ENCODE measurements at regions of chr6 and their contacts with region 1.

Region 1: DNA sequence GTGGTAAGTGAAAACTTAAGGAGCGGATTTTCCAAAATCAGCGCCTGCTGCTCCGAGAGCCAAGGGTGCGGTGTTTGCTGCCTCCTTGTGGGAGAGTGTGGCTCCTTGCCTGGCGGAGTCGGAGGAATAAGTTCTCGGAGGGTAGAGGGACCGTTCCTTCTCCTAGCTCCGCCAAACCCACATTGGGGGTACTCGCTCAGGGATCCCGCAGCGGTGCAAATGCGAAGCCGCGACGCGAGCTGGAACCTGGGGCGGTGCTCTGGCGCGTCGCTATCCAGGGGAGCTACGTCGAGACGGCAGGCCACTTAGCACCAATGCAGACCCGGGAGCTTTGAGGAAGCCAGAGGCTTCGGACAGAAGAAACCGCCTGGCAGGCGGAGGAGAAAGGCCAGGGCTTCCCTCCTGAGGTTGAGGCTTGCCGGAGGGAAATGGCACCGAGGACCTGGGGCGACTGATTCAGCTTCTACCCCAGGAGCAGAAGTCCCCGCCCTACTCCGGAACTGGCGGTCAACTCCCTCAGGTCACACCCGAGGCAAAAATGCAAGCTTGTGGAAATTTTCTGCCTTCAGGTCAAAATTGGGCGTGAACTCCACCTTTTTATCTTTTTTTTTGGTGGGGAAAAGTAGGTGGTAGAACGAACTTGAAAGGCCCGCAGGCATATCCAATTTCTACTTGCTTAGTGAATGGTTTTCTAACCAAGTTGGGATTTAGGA is 5.7 kb upstream of the DDX43 start:
- DNase-seq: peak; percentile 80 to 85
- H3K4me3 ChIP-seq: peak overlapping the region; percentile 63
- H3K4me3 Mint-ChIP-seq: peak overlapping the region; percentile 87
- H3K27ac Mint-ChIP-seq: peak overlapping the region; percentile 90
- H3K4me1 ChIP-seq: no peaks in the 10 kb centered on the region
- H3K4me1 Mint-ChIP-seq: no peaks in the 10 kb centered on the region
- H3K27me3 ChIP-seq: no peaks in the 10 kb centered on the region
- H3K27me3 Mint-ChIP-seq: no peaks in the 10 kb centered on the region
- CTCF ChIP-seq: peak; percentile 79 to 81

Region 2: DNA sequence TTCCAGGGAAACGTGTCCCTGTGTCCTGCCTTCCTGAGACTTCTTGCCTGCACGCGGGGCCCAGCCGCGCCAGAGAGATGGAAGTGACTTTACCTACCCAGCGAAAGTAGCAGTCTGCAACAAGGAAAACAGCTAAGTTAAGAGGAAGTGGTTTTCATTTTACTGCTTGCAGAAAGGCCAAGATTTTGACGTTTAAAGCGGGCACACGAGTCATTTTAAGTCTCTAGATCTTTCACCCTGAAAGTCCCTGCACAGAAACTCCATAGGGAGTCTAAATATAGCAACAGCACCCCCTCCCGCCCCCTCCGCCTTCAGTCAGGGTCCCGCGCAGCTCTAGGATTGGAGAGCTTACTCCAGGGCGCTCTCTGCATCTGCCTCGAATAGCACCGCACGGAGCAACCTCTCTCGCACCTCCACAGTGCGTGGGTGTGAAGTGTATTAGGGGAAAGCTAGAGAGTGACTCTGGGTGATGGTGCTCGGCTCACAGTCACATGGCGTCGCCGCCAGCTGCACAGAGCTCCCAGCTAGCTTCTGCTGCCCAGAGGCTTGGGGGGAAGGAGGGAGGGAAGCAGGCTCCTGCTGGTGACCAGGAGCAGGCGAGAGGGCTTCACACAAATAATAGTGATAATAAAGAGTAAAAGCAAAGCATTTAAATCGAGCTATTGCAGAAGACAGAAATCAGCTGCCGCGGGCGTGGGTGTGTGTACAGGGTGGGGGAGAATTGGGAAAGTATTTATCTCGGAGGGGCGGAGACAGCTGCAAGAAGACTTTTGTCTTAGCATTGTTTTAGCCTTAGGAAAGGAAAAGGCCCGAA is 768.9 kb before region 1 on chr6:
- CTCF ChIA-PET with region 1: no interaction called
- POLR2A ChIA-PET with region 1: no interaction called
- intact Hi-C with region 1: no loop called
- DNase-seq: no peak
- H3K4me3 ChIP-seq: no peak overlapping the region
- H3K4me3 Mint-ChIP-seq: peak overlapping the region; percentile 61
- H3K27ac Mint-ChIP-seq: no peak overlapping the region
- H3K4me1 ChIP-seq: no peaks in the 10 kb centered on the region
- H3K4me1 Mint-ChIP-seq: peaks cover 7% of the 10 kb centered on the region
- H3K27me3 ChIP-seq: no peaks in the 10 kb centered on the region
- H3K27me3 Mint-ChIP-seq: peaks cover 16% of the 10 kb centered on the region
- CTCF ChIP-seq: no peak

Region 3: GRCh38 chr6:73285674-73286283 is 103.2 kb before region 1 on chr6:
- CTCF ChIA-PET with region 1: interaction called, 19 read pairs
- POLR2A ChIA-PET with region 1: no interaction called
- intact Hi-C with region 1: loop called (anchors 1 kb)
- DNase-seq: peak in 1 of 2 experiments; percentile 42
- H3K4me3 ChIP-seq: no peak overlapping the region
- H3K4me3 Mint-ChIP-seq: no peak overlapping the region
- H3K27ac Mint-ChIP-seq: no peak overlapping the region
- H3K4me1 ChIP-seq: peaks cover 23% of the 10 kb centered on the region; the same call in 1 of the 2 replicates
- H3K4me1 Mint-ChIP-seq: peaks cover 9% of the 10 kb centered on the region
- H3K27me3 ChIP-seq: no peaks in the 10 kb centered on the region
- H3K27me3 Mint-ChIP-seq: no peaks in the 10 kb centered on the region
- CTCF ChIP-seq: peak; percentile 19 to 56

Region 4: DNA sequence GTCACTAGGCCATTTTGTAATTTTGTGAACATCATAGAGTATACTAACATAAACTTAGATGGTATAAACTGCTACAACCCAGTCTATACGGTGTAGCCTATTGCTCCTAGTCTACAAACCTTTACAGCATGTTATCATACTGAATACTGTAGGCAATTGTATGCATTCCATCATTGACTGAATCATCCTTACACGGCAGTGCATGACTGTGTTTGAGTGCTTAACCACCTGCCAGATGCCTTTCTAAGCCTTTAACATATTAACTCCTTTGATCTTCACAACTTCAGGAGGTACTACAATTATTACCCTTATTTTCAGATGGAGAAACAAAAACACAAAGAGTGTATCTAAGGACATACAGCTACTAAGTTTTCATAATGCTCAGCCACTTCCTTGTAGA is 48.9 kb before region 1 on chr6:
- CTCF ChIA-PET with region 1: interaction called, 5 read pairs
- POLR2A ChIA-PET with region 1: no interaction called
- intact Hi-C with region 1: loop called (anchors 5 kb)
- DNase-seq: peak in 1 of 2 experiments; percentile 54
- H3K4me3 ChIP-seq: no peak overlapping the region
- H3K4me3 Mint-ChIP-seq: no peak overlapping the region
- H3K27ac Mint-ChIP-seq: no peak overlapping the region
- H3K4me1 ChIP-seq: peaks cover 7% of the 10 kb centered on the region; the same call in 1 of the 2 replicates
- H3K4me1 Mint-ChIP-seq: peaks cover 13% of the 10 kb centered on the region
- H3K27me3 ChIP-seq: no peaks in the 10 kb centered on the region
- H3K27me3 Mint-ChIP-seq: no peaks in the 10 kb centered on the region
- CTCF ChIP-seq: no peak

Measured in Caco-2 (cell line).